Right ventricle myocardium superior (tissue), 1 donor: ENCODE measurements at regions of chr5 and their contacts with region 1.

Region 1: DNA sequence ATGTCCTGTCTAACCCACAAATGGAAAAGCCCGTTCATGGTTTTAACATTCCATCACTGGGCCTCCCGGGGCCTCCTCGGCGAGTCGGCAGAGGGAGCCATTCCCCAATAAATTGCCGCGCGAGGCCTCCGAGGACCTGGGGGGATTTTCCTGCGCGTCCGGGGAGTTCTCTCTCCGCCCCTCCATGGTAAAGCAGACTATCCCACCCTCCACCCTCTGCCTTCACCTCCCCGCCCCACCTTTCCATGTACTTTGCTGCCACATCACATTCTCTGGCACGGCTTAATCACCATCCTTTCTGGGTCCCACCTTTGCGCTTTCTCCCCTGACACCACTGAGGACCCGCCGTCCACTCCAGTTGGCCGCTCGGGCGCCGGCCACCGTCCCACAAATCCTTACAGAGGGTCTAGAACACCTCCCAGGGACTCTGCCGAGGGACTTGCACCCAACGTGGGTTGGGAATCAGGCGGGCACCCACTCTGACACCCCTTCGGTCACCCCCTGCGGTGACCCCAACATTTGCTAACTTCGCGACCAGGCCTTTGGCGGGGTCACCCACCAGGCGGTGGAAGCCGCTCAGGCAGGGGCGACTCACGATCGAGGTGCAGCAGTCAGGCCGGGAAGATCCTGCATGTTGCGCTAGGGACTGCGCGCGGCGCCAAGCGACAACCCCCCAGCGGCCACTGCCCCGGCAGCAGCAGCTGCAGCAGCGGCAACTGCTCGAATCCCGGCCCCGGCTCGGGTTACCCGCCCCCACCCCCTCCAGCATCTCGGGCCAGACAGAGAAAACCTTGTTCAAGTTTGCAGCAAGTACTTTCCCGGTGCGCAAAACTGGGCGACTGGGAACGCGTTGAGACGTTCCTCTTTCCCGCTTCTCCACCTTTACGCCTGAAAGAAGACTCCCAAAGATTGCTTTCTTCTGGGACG is at the start of gene MEGF10:
- DNase-seq: peak; percentile 45
- ATAC-seq: peak; percentile 85
- total RNA-seq, gene MEGF10: 0.78 TPM

Region 2: GRCh38 chr5:127441799-127442484 is 151.7 kb after region 1 on chr5:
- intact Hi-C with region 1: loop called (anchors 5 kb)
- DNase-seq: no peak
- ATAC-seq: no peak

Region 3: DNA sequence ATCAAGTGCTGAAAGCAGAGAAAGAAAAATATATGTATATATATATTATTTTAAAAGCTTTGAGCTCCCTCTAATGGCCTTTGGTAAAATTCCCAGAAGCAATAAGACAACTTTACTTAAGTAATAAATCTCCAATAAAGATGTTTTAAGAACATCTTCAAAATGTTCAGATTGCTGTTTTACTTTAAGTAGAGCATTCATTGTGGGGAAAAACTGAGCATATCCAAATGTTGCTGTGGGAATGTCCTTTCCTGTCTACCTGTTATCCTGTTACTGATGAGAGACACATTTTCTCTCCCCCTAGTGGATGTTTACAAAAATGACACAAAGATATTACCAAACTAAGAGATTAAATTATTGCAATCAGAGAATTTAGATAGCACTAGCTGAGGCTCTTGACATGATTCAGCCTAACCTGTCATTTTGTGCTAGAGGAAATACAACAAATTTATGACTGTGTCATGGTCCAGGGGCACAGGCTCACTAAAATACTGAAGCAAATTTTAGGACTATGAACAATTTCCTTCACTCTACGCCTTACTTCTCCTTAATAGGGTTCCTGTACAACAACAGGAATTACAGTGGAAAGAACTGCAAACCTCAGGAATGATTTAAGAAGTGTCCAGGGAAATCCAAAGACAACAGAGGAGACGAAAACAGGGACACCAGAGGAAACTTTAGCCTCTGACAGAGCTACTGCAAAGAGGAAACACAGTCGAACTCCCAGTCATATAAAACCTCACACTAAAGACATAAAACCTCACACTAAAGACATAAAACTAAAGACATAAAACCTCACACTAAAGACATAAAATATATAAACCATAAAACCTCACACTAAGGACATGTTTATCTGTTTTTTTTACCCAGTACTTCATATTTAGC is 202.8 kb after region 1 on chr5:
- intact Hi-C with region 1: loop called (anchors 5 kb)
- DNase-seq: no peak
- ATAC-seq: peak; percentile 58

Region 4: DNA sequence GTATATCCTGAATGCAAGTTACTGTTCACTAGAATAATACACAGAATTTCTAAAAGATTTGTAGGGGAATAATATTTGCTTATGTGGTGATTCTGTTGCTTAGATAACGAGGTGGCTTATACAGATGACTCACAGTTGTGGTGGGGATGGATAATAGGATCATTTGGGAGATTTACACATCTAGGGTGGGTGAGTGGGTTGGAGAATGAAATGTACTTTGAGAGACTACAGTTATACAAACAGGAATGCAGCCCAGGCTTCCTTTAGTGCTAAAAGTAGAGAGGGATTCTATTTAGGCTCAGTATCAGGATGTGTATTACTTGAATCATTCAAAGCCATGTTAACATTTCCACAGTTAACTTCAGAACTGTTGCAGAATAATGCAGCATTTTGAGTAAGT is 360.4 kb after region 1 on chr5:
- intact Hi-C with region 1: no loop called
- DNase-seq: no peak
- ATAC-seq: no peak